H1 (cell line): ENCODE measurements at regions of chr17 and their contacts with region 1.

Region 1: GRCh38 chr17:48054238-48055185 is 6.4 kb downstream of the NFE2L1 start:
- DNase-seq: peak; percentile 89 to 98
- H3K4me3 ChIP-seq: peak overlapping the region; percentile 79 to 98 (median 84)
- H3K27ac ChIP-seq: peak overlapping the region; percentile 88
- H3K4me1 ChIP-seq: peaks cover 16 to 61% (median 40%) of the 10 kb centered on the region in 4 experiments
- H3K27me3 ChIP-seq: no peaks in the 10 kb centered on the region
- CTCF ChIP-seq: no peak
- EP300 ChIP-seq: no peak
- POLR2A ChIP-seq: peak in 1 of 2 experiments; percentile 13; a peak in 1 of 3 replicates
- RAD21 ChIP-seq: no peak

Region 2: GRCh38 chr17:47889734-47890529 is 164.6 kb before region 1 on chr17:
- CTCF ChIA-PET with region 1: no interaction called
- POLR2A ChIA-PET with region 1: no interaction called
- DNase-seq: peak; percentile 73 to 97
- H3K4me3 ChIP-seq: no peak overlapping the region
- H3K27ac ChIP-seq: no peak overlapping the region
- H3K4me1 ChIP-seq: peaks cover 0 to 9% (median 7%) of the 10 kb centered on the region in 4 experiments; a peak in 6 of 7 replicates
- H3K27me3 ChIP-seq: no peaks in the 10 kb centered on the region
- CTCF ChIP-seq: peak; percentile 87 to 98 (median 95)
- EP300 ChIP-seq: no peak
- POLR2A ChIP-seq: no peak
- RAD21 ChIP-seq: peak; percentile 99

Region 3: GRCh38 chr17:47949136-47949759 is 105.3 kb before region 1 on chr17:
- CTCF ChIA-PET with region 1: interaction called, 15 read pairs
- POLR2A ChIA-PET with region 1: interaction called, 3 read pairs
- DNase-seq: peak; percentile 82 to 99
- H3K4me3 ChIP-seq: peak overlapping the region in 3 of 4 experiments; percentile 11 to 47 (median 29); a peak in 5 of 8 replicates
- H3K27ac ChIP-seq: no peak overlapping the region
- H3K4me1 ChIP-seq: peaks cover 0 to 8% (median 4%) of the 10 kb centered on the region in 4 experiments; a peak in 3 of 7 replicates
- H3K27me3 ChIP-seq: peaks cover 0 to 6% (median 0%) of the 10 kb centered on the region in 4 experiments; a peak in 1 of 7 replicates
- CTCF ChIP-seq: peak; percentile 90 to 98 (median 96)
- EP300 ChIP-seq: 0 out of 3 replicates have a peak, but pooled peaks of 1 of the 2 experiments have one; percentile 13
- POLR2A ChIP-seq: no peak
- RAD21 ChIP-seq: peak; percentile 84 to 93

Region 4: GRCh38 chr17:48068491-48068961 is 14.0 kb after region 1 on chr17:
- CTCF ChIA-PET with region 1: interaction called, 203 read pairs
- POLR2A ChIA-PET with region 1: interaction called, 1,227 read pairs
- DNase-seq: peak in 1 of 2 experiments; percentile 62
- H3K4me3 ChIP-seq: no peak overlapping the region
- H3K27ac ChIP-seq: no peak overlapping the region
- H3K4me1 ChIP-seq: peaks cover 0 to 2% (median 0%) of the 10 kb centered on the region in 4 experiments; a peak in 1 of 7 replicates
- H3K27me3 ChIP-seq: no peaks in the 10 kb centered on the region
- CTCF ChIP-seq: peak; percentile 60 to 74 (median 69)
- EP300 ChIP-seq: no peak
- POLR2A ChIP-seq: no peak
- RAD21 ChIP-seq: peak; percentile 39 to 51

Region 5: DNA sequence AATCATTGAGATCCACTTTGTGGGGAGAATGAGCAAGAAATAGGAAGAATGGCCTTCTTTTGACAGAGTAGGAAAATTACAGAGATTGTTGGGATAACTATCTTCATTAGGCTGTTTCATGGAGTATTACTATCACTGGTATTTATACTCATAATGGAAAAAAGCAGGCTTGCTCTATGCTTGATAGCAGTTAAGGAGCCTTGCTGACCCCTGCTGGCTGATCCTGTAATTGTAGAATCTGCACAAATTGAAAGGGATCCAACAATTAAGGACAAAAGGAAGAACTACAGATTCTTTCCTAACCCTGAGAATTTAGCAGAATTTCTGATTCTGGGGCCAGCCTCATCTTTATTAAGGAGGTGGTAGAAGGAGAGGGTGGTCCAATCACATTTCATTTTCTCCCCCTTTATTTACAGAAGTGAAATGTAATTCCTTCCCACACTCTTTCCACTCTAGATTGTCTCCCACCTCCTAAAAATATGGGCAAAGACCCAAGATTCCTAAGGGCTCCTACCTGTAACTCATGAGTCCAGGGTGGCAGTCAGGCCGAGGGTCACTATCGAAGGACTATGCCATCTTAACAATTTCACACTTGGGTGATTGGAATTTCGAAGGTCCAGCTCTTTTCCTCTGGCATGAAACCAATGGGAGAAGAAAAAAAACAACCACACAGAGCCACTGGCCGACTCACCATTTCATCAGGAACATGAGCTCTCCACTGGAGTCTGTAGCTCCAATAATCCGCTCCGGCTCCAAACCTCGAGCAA is 20.0 kb after region 1 on chr17:
- CTCF ChIA-PET with region 1: interaction called, 203 read pairs
- POLR2A ChIA-PET with region 1: interaction called, 1,227 read pairs
- DNase-seq: peak in 1 of 2 experiments; percentile 83
- H3K4me3 ChIP-seq: no peak overlapping the region
- H3K27ac ChIP-seq: no peak overlapping the region
- H3K4me1 ChIP-seq: no peaks in the 10 kb centered on the region
- H3K27me3 ChIP-seq: no peaks in the 10 kb centered on the region
- CTCF ChIP-seq: peak in 2 of 3 experiments; percentile 75 to 77; a peak in 3 of 4 replicates
- EP300 ChIP-seq: no peak
- POLR2A ChIP-seq: no peak
- RAD21 ChIP-seq: peak; percentile 67 to 75

Region 6: DNA sequence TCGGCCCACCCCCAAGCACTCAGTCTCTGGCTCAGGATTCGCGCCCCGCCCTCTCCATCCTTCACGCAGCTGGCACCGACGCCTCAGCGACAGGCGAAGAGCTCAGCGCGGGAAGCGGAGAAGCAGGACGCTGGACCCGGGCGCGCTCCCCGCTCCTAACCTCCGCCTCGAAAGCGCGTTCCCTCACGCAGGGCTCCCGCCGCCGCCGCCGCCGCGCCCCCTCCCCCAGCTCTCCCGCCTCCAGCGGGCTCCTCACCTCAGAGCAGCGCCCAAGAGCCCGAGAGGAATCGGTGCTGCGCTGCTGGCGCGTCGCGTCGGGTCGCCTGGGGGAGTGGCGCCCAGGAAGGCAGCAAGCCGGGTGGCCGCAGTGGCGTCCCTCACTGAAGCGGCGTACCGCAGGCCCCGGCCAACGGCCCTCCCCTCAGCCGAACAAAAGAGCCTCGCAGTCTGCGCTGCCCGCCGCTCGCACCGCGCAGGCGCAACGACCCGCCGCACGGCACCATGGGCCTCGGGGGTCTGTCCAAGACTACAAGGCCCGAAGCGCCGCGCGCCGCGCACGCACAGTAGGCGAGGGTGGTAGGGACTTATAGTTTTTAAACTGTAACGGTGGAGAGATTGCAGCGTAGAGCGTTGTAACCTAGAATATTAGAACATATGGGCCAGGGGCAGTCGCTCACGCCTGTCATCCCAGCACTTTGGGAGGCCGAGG is 46.7 kb after region 1 on chr17 and contains the start of gene CBX1:
- CTCF ChIA-PET with region 1: interaction called, 11 read pairs
- POLR2A ChIA-PET with region 1: interaction called, 112 read pairs
- DNase-seq: peak; percentile 92 to 95
- H3K4me3 ChIP-seq: peak within 1 kb of the TSS; percentile 74 to 94 (median 87)
- H3K27ac ChIP-seq: peak within 1 kb of the TSS; percentile 72; the same call in 1 of the 2 replicates
- H3K4me1 ChIP-seq: peaks cover 0 to 3% (median 0%) of the 10 kb centered on the region in 4 experiments; a peak in 1 of 7 replicates
- H3K27me3 ChIP-seq: no peaks in the 10 kb centered on the region
- CTCF ChIP-seq: 0 out of 4 replicates have a peak, but pooled peaks of 1 of the 3 experiments have one; percentile 3
- EP300 ChIP-seq: 0 out of 3 replicates have a peak, but pooled peaks of 1 of the 2 experiments have one; percentile 19
- POLR2A ChIP-seq: peak in 1 of 2 experiments; percentile 43; a peak in 2 of 3 replicates
- RAD21 ChIP-seq: no peak
- total RNA-seq, gene CBX1: 166 and 173 TPM in 2 replicates

Region 7: DNA sequence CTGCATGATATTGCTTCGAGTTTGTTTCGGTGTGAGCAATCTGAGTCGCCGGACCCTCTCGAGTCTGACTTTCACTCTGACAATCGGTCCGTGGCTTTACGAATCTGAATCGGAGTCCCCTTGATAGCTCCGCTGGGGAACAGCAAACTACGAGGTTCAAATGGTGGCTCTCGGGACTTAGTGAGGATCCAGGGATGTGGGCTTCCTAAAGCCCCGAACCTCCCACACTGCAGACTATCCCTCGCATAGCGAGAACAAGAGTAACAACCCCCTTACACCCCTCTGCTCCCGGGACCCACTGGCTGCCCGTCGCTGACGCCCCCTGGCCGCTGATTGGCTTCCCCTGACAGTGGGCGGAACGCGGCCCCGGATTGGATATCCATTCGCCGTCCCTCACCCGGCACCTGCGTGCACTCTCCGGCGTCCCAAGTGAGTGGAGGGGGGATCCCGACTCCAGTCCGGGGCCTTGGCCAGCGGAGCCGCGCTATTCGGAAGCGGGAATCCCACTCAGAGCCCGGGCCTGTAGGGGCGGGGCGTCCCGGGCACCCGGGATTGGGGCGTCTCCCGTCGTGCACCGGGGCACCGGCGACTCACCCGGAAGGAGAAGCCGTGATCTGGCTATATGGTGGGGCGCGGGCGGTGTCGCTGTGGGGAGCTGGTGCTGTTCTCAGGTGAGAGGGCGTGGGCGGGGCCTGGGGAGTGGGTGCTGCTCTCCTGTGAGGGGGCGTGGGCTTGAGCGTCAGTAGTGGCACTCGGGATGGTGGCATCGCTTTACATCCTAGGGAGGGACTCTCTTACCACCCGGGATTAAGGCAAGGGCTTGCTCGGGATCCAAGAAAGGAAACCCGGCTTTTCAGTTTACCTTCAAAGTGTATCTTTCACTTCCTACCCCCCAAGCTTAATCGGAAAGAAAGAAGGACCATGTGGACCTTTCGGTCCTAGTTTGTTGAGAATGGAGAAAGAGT is 52.9 kb after region 1 on chr17 and contains the start of gene SNX11:
- CTCF ChIA-PET with region 1: interaction called, 5 read pairs
- POLR2A ChIA-PET with region 1: interaction called, 112 read pairs
- DNase-seq: peak; percentile 61 to 96
- H3K4me3 ChIP-seq: peak within 1 kb of the TSS; percentile 82 to 95 (median 88)
- H3K27ac ChIP-seq: peak within 1 kb of the TSS; percentile 69
- H3K4me1 ChIP-seq: no peaks in the 10 kb centered on the region; a peak in 1 of 7 replicates
- H3K27me3 ChIP-seq: no peaks in the 10 kb centered on the region
- CTCF ChIP-seq: no peak
- EP300 ChIP-seq: no peak
- POLR2A ChIP-seq: peak in 1 of 2 experiments; percentile 41; a peak in 1 of 3 replicates
- RAD21 ChIP-seq: no peak
- total RNA-seq, gene SNX11: 20.9 and 21.1 TPM in 2 replicates

Region 8: GRCh38 chr17:48113201-48113676 is 58.7 kb after region 1 on chr17:
- CTCF ChIA-PET with region 1: interaction called, 5 read pairs
- POLR2A ChIA-PET with region 1: interaction called, 36 read pairs
- DNase-seq: no peak
- H3K4me3 ChIP-seq: no peak overlapping the region
- H3K27ac ChIP-seq: no peak overlapping the region
- H3K4me1 ChIP-seq: no peaks in the 10 kb centered on the region
- H3K27me3 ChIP-seq: no peaks in the 10 kb centered on the region
- CTCF ChIP-seq: no peak
- EP300 ChIP-seq: no peak
- POLR2A ChIP-seq: no peak
- RAD21 ChIP-seq: no peak